ENCODE measurements at regions of chr12 and their contacts with region 1.

Region 1: DNA sequence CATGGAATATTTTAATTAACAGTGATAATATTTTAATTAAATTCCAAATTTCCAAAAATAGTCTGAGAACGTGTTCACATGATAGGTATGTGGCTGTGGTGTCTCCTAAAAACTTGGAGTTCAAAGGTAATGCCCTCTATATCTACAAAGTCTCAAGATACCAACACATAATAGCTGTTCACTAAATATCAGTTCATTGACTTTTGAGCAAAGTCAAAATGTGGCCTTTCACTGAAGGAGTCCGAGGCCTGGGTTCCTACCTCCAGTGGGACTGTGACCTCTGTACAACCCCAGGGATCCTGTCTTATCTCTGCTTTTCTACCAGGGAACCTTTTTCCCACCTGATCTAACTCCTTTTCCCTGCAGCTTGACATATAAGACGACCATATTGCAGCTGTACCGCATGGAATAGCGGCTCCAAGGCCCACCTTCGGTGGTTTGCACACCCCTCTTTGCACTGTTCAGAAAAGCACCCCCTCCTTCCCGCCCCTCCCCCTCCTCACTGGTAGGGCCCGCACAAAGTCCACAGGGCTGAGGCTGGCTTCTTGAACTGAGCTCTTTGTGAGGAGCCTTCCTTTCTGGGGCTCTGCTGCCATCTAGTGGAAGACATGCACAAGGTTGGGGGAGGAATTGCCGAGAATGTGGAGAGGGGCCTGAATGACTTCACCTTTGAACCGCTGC is 3.1 kb downstream of the CCND2 start:
- DNase-seq: peak; percentile 72 to 90 (median 76)
- H3K4me3 ChIP-seq: no peak overlapping the region
- H3K4me3 Mint-ChIP-seq: peak overlapping the region; percentile 39 to 42
- H3K27ac ChIP-seq: no peak overlapping the region
- H3K27ac Mint-ChIP-seq: peak overlapping the region in 1 of 7 donors; percentile 75
- H3K4me1 ChIP-seq: peaks cover 53 to 78% of the 10 kb centered on the region in 2 donors
- H3K4me1 Mint-ChIP-seq: peaks cover 59% of the 10 kb centered on the region
- H3K27me3 ChIP-seq: peaks cover 4 to 28% of the 10 kb centered on the region in 2 donors
- H3K27me3 Mint-ChIP-seq: peaks cover 17 to 46% (median 35%) of the 10 kb centered on the region in 3 donors
- CTCF ChIP-seq: peak; percentile 89

Region 2: GRCh38 chr12:3872800-3873636 is 403.6 kb before region 1 on chr12 and contains the start of gene PARP11:
- intact Hi-C with region 1: loop called in 1 of 2 experiments (anchors 5 kb)
- DNase-seq: peak; percentile 92 to 93 (median 92)
- H3K4me3 ChIP-seq: peak within 1 kb of the TSS; percentile 75 to 97 (median 97)
- H3K4me3 Mint-ChIP-seq: peak within 1 kb of the TSS; percentile 86 to 96
- H3K27ac ChIP-seq: peak within 1 kb of the TSS; percentile 97 to 98
- H3K27ac Mint-ChIP-seq: peak within 1 kb of the TSS; percentile 92 to 98 (median 97)
- H3K4me1 ChIP-seq: peaks cover 27 to 41% of the 10 kb centered on the region in 2 donors
- H3K4me1 Mint-ChIP-seq: peaks cover 37% of the 10 kb centered on the region
- H3K27me3 ChIP-seq: no peaks in the 10 kb centered on the region
- H3K27me3 Mint-ChIP-seq: peaks cover 0 to 6% (median 0%) of the 10 kb centered on the region in 3 donors
- CTCF ChIP-seq: no peak
- polyA plus RNA-seq, gene PARP11: 3.2 to 6.2 (median 5.4) TPM

Region 3: GRCh38 chr12:3998968-3999826 is 277.5 kb before region 1 on chr12:
- intact Hi-C with region 1: loop called (anchors 5 kb)
- DNase-seq: no peak
- H3K4me3 ChIP-seq: no peak overlapping the region
- H3K4me3 Mint-ChIP-seq: no peak overlapping the region
- H3K27ac ChIP-seq: no peak overlapping the region
- H3K27ac Mint-ChIP-seq: peak overlapping the region in 1 of 7 donors; percentile 34
- H3K4me1 ChIP-seq: no peaks in the 10 kb centered on the region
- H3K4me1 Mint-ChIP-seq: peaks cover 2% of the 10 kb centered on the region
- H3K27me3 ChIP-seq: no peaks in the 10 kb centered on the region
- H3K27me3 Mint-ChIP-seq: peaks cover 0 to 4% (median 2%) of the 10 kb centered on the region in 3 donors
- CTCF ChIP-seq: no peak

Region 4: GRCh38 chr12:4107436-4107878 is 169.2 kb before region 1 on chr12:
- intact Hi-C with region 1: loop called in 1 of 2 experiments (anchors 5 kb)
- DNase-seq: peak; percentile 82 to 93 (median 89)
- H3K4me3 ChIP-seq: peak overlapping the region in 1 of 3 experiments; percentile 54
- H3K4me3 Mint-ChIP-seq: peak overlapping the region; percentile 72 to 83
- H3K27ac ChIP-seq: no peak overlapping the region
- H3K27ac Mint-ChIP-seq: peak overlapping the region; percentile 7 to 85 (median 58)
- H3K4me1 ChIP-seq: peaks cover 16 to 20% of the 10 kb centered on the region in 2 donors
- H3K4me1 Mint-ChIP-seq: peaks cover 33% of the 10 kb centered on the region
- H3K27me3 ChIP-seq: peaks cover 0 to 4% of the 10 kb centered on the region in 2 donors
- H3K27me3 Mint-ChIP-seq: peaks cover 5 to 21% (median 12%) of the 10 kb centered on the region in 3 donors
- CTCF ChIP-seq: peak; percentile 83

Region 5: GRCh38 chr12:4148418-4149056 is 128.1 kb before region 1 on chr12:
- intact Hi-C with region 1: loop called in 1 of 2 experiments (anchors 5 kb)
- DNase-seq: peak; percentile 87 to 95 (median 92)
- H3K4me3 ChIP-seq: no peak overlapping the region
- H3K4me3 Mint-ChIP-seq: peak overlapping the region in 1 of 2 donors; percentile 39
- H3K27ac ChIP-seq: no peak overlapping the region
- H3K27ac Mint-ChIP-seq: peak overlapping the region; percentile 61 to 84 (median 75)
- H3K4me1 ChIP-seq: peaks cover 44 to 49% of the 10 kb centered on the region in 2 donors
- H3K4me1 Mint-ChIP-seq: peaks cover 50% of the 10 kb centered on the region
- H3K27me3 ChIP-seq: no peaks in the 10 kb centered on the region
- H3K27me3 Mint-ChIP-seq: peaks cover 2 to 14% (median 2%) of the 10 kb centered on the region in 3 donors
- CTCF ChIP-seq: no peak

Measured in CD14-positive monocyte (primary cell).